Activated T-helper 2 cell treated with anti-CD3 and anti-CD28 coated beads, Interferon-gamma antibody, Interleukin-2, Interleukin-4, amounts not matched to agents 10 μg/mL and 5 μg/mL and 100 μg/mL, durations not matched to agents 14 hours and 24 hours and 36 hours (primary cell): ENCODE measurements at regions of chr11 and their contacts with region 1.

Region 1: DNA sequence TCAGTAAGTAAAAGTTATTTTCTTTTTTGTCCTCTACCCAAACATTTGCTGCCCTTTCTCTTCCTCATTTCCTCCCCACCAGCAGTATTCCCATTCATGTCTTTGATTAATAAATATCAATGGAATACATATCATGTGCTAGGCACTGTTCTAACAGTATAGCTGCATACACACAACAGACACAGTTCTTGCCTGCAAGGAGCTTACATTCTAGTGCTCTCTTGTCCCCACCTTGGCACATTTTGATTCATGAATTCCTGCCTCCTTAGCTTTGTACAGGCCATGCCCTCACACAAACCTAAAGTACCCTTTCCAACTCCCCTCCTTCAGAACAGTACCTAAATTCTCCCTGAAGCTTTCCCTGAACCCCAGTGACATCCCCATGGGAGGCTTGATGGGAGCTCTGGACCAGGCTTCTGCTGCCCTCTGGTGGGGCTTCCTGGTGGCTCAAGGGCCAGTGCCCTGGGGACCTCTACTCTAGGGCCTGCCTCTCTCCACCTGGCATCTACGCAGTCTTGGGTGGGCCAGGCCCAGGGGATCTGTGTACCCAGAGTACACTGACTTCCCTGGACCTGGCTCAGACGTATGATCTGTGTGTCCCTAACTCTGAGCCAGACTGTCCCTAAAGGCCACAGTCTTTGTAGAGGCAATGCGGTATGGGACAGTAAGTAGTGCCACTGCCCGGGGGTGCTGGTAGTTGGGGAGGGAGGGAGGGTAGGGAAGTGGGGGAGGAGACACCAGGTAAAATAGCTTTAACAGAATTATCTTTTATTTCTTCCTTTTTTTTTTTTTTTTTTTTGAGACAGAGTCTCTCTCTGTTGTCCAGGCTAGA is 14.1 kb downstream of the RPS13 start:
- DNase-seq: no peak
- H3K4me3 Mint-ChIP-seq: no peak overlapping the region
- H3K27ac Mint-ChIP-seq: no peak overlapping the region
- H3K4me1 Mint-ChIP-seq: no peaks in the 10 kb centered on the region
- H3K27me3 Mint-ChIP-seq: peaks cover 5% of the 10 kb centered on the region

Region 2: GRCh38 chr11:16785520-16786128 is 277.8 kb before region 1 on chr11:
- intact Hi-C with region 1: loop called (anchors 1 kb)
- DNase-seq: peak; percentile 37
- H3K4me3 Mint-ChIP-seq: no peak overlapping the region
- H3K27ac Mint-ChIP-seq: no peak overlapping the region
- H3K4me1 Mint-ChIP-seq: peaks cover 3% of the 10 kb centered on the region
- H3K27me3 Mint-ChIP-seq: no peaks in the 10 kb centered on the region

Region 3: GRCh38 chr11:16945671-16946469 is 117.5 kb before region 1 on chr11:
- intact Hi-C with region 1: loop called (anchors 1 kb)
- DNase-seq: no peak
- H3K4me3 Mint-ChIP-seq: no peak overlapping the region
- H3K27ac Mint-ChIP-seq: no peak overlapping the region
- H3K4me1 Mint-ChIP-seq: peaks cover 2% of the 10 kb centered on the region
- H3K27me3 Mint-ChIP-seq: peaks cover 6% of the 10 kb centered on the region